Activated naive CD4-positive, alpha-beta T cell treated with anti-CD3 and anti-CD28 coated beads for 36 hours (primary cell): ENCODE measurements at regions of chr2 and their contacts with region 1.

Region 1: DNA sequence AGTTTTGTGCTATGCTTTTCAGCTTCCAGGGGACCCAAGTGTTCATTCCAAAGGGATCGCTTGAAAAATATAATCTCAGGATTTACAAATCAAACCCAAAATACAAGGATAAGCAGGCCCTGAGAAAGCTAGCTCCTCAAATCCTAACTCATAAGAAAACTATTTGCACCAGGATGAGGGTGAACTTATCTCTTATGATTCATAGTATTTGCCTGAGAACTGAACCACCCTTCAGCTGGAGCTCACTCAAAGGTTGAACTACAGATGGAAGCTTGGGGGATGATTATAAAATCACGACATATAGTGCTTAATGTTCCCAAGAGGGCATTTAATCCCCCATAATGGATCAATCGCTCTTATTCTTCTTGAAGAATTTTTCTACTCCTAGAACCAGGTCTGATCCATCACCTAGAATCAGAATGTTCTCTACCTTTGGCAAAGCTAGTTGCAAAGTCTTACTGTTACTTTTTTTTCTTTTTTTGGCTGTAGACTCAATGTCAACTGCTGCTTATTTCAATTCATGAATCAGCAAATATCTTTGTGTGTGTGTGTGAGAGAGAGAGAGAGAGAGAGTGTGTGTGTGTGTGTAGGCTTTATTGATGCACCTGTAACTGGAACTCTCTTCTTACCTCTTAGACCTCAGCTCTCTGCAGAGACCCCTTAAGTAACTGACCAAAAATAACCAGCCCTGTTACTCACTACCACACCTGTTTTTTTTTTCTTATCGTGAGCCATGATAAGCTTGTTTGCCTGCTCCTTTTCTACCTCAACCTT is 44.8 kb downstream of the ARL4C start:
- DNase-seq: no peak
- H3K4me3 Mint-ChIP-seq: peak overlapping the region; percentile 78
- H3K27ac Mint-ChIP-seq: peak overlapping the region; percentile 96
- H3K4me1 Mint-ChIP-seq: peaks cover 73% of the 10 kb centered on the region
- H3K27me3 Mint-ChIP-seq: no peaks in the 10 kb centered on the region

Region 2: DNA sequence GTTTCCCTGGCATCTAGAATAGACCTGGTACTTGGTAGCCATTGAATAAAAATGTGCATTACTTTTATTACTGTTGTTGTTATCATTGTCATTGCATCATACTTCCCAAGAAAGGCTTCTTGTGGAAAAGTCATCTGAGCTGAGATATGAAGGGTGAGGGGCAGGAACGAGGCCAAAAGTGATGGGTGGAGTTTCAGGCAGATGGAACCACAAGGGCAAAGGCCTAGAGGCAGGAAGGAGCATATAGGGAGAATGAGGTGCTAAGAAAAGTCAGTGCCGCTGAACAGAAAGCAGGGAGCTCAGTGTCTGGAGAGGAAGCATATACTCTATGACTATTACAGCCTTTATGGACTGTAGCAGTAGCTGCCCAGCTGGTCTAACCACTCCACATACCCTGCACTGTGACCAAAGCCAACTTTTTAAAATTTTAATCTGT is 182.3 kb before region 1 on chr2:
- CTCF ChIA-PET with region 1: no interaction called
- intact Hi-C with region 1: no loop called
- DNase-seq: no peak
- H3K4me3 Mint-ChIP-seq: no peak overlapping the region
- H3K27ac Mint-ChIP-seq: no peak overlapping the region
- H3K4me1 Mint-ChIP-seq: peaks cover 47% of the 10 kb centered on the region
- H3K27me3 Mint-ChIP-seq: no peaks in the 10 kb centered on the region

Region 3: DNA sequence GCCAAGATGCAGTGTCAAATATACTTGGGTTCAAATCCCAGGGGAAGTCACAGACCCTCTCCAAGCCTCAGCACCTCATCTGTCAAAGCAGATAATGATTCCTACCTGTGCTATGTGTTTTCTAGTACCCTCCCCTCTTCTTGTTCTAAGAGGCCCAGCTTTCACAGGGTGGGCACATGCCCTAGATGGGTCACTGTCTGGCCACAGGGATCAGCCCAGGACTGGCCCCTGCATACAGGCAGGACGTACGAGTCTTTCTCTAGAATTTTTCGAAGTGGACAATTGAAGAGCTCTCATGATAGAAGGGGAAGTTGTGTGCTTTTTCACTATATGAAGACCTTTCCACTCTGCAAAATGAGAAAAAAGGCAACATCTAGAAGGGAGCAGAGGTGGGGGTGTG is 22.6 kb after region 1 on chr2:
- CTCF ChIA-PET with region 1: interaction called, 5 read pairs
- intact Hi-C with region 1: loop called (anchors 1 kb)
- DNase-seq: no peak
- H3K4me3 Mint-ChIP-seq: no peak overlapping the region
- H3K27ac Mint-ChIP-seq: peak overlapping the region; percentile 83
- H3K4me1 Mint-ChIP-seq: peaks cover 45% of the 10 kb centered on the region
- H3K27me3 Mint-ChIP-seq: no peaks in the 10 kb centered on the region

Region 4: DNA sequence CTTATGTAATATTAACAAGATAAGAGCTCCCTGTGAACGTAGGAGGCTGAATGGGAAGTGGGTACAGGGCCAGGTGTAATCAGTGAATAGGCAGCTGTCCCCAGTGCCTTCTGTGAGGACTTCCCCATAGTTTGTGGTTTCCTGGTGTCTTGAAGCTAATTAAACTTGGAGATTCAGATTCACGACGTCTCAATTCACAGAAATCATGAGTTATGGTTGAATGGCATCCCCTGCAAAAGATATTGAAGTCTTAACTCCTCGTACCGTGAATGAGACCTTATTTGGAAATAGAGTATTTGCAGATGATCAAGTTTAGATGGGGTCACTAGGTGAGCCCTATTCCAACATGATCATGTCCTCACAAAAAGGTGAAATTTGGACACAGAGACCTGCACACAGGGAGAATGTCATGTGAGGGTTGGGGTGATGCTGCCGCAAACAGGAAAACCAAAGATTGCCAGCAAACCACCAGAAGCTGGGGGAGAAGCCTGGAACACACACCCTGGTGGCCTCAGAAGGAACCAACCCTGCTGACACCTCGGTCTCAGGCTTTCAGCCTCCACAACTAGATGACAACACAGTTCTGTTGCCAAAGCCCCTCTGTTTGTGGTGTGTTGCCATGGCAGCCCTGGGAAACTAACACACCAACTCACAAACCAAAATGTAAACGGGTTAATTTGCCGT is 31.7 kb after region 1 on chr2:
- CTCF ChIA-PET with region 1: interaction called, 16 read pairs
- intact Hi-C with region 1: no loop called
- DNase-seq: peak; percentile 88
- H3K4me3 Mint-ChIP-seq: peak overlapping the region; percentile 59
- H3K27ac Mint-ChIP-seq: peak overlapping the region; percentile 88
- H3K4me1 Mint-ChIP-seq: peaks cover 78% of the 10 kb centered on the region
- H3K27me3 Mint-ChIP-seq: no peaks in the 10 kb centered on the region

Region 5: GRCh38 chr2:234494361-234495250 is 42.6 kb after region 1 on chr2:
- CTCF ChIA-PET with region 1: interaction called, 6 read pairs
- intact Hi-C with region 1: loop called (anchors 1 kb)
- DNase-seq: no peak
- H3K4me3 Mint-ChIP-seq: peak overlapping the region; percentile 90
- H3K27ac Mint-ChIP-seq: peak overlapping the region; percentile 89
- H3K4me1 Mint-ChIP-seq: peaks cover 48% of the 10 kb centered on the region
- H3K27me3 Mint-ChIP-seq: no peaks in the 10 kb centered on the region

Region 6: GRCh38 chr2:234544659-234545611 is 92.9 kb after region 1 on chr2:
- CTCF ChIA-PET with region 1: no interaction called
- intact Hi-C with region 1: no loop called
- DNase-seq: peak; percentile 85
- H3K4me3 Mint-ChIP-seq: no peak overlapping the region
- H3K27ac Mint-ChIP-seq: no peak overlapping the region
- H3K4me1 Mint-ChIP-seq: no peaks in the 10 kb centered on the region
- H3K27me3 Mint-ChIP-seq: peaks cover 4% of the 10 kb centered on the region